ENCODE measurements at regions of chr5 and their contacts with region 1.

Region 1: GRCh38 chr5:134577796-134578363 is 52.4 kb downstream of the JADE2 start:
- DNase-seq: peak; percentile 59
- ATAC-seq: peak; percentile 80
- H3K4me3 ChIP-seq: no peak overlapping the region
- H3K27ac ChIP-seq: no peak overlapping the region
- H3K4me1 ChIP-seq: no peaks in the 10 kb centered on the region
- H3K27me3 ChIP-seq: no peaks in the 10 kb centered on the region
- CTCF ChIP-seq: peak; percentile 94
- EP300 ChIP-seq: no peak
- POLR2A ChIP-seq: no peak
- RAD21 ChIP-seq: peak; percentile 85

Region 2: DNA sequence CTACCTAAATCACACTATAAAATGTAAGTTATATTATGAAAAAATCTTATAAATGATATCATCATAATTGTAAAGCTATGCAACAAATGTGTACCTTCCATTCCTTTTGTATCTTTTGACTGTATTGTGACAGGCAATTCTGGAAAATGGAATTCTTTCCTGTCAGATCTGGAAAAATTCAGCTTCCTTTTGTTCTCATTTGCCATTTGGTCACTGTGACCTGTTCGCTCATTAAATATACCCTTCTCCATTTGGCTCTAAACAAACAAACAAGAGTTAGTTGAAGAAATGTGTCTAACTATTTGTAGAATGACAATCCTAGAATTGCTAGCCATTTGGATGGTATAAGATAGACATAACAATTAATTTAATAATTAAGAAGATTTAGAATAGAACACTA is 273.6 kb before region 1 on chr5:
- CTCF ChIA-PET with region 1: interaction called, 7 read pairs
- POLR2A ChIA-PET with region 1: no interaction called
- in situ Hi-C with region 1: loop called (anchors 5 kb)
- intact Hi-C with region 1: loop called (anchors 2 kb)
- DNase-seq: no peak
- ATAC-seq: no peak
- H3K4me3 ChIP-seq: no peak overlapping the region
- H3K27ac ChIP-seq: no peak overlapping the region
- H3K4me1 ChIP-seq: peaks cover 16% of the 10 kb centered on the region
- H3K27me3 ChIP-seq: no peaks in the 10 kb centered on the region
- CTCF ChIP-seq: no peak
- EP300 ChIP-seq: no peak
- POLR2A ChIP-seq: no peak
- RAD21 ChIP-seq: no peak

Region 3: GRCh38 chr5:134604908-134605307 is 27.0 kb after region 1 on chr5:
- CTCF ChIA-PET with region 1: no interaction called
- POLR2A ChIA-PET with region 1: no interaction called
- in situ Hi-C with region 1: no loop called
- intact Hi-C with region 1: loop called (anchors 1 kb)
- DNase-seq: no peak
- ATAC-seq: no peak
- H3K4me3 ChIP-seq: no peak overlapping the region
- H3K27ac ChIP-seq: no peak overlapping the region
- H3K4me1 ChIP-seq: peaks cover 13% of the 10 kb centered on the region; the same call in 1 of the 2 replicates
- H3K27me3 ChIP-seq: no peaks in the 10 kb centered on the region
- CTCF ChIP-seq: no peak
- EP300 ChIP-seq: no peak
- POLR2A ChIP-seq: no peak
- RAD21 ChIP-seq: no peak

Measured in HepG2 (cell line).